Calu3 (cell line): ENCODE measurements at regions of chr2 and their contacts with region 1.

Region 1: DNA sequence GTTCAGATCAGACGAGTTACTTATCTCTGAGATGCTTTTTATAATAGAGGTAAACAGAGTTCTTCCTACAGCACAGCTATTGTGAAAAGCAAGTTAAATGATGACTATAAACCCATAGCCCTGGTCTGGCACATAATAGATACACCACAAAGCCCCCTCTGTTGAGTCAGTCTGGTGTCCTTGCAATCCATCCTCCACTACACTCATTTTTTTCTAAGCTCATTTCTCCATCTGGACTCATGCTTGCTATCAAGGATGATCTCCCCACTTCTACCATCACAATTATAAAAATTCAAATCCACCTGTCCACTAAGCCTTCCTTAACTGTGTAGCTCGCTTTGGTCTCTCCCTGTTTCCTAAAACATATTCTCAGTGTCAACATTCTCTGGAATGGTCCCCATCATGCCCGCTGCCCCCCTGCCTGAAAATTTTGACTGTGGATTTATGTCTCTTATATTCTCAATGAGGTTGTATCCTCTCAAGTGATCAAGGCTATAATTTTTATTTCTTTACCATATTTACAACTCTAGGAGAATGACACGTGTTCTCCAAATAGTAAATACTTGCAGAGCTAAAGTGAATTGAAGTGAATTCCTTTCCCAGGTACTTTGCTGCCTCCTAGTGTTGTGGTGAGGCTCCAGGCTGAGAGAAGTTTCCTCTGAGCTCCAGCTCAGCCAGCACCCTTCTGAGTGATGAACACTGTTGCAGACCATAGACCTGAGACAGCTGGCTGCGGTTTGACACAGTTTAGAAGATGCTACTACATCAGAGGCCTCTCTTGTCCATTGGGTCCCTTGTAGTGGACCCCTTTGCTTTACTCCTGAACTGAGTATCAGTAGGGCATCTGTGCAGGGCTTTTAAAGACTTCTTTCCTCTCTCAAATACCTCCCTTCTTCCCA is 108.7 kb downstream of the DPP10 start:
- DNase-seq: peak; percentile 71
- H3K4me3 Mint-ChIP-seq: no peak overlapping the region
- H3K27ac Mint-ChIP-seq: peak overlapping the region; percentile 12
- H3K4me1 Mint-ChIP-seq: peaks cover 44% of the 10 kb centered on the region
- H3K27me3 Mint-ChIP-seq: peaks cover 22% of the 10 kb centered on the region
- CTCF ChIP-seq: peak; percentile 78

Region 2: DNA sequence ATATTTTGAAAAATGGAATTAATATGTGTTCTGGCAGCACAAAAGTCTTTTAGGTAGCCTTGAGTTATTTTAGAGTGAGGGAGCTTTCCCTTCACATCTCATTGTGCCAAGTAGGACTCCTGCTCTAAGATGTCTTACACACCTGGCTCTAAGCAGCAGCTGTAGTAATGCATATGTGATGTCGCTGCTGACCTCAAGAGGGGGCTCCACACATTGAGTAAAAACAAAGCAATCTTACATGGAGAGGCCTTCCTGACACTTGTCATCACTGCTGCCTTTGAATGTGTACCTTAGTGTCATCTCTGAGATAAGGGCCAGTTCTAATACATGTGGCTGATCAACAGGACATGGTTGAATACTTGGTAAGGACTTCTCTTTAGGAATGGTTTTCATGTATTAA is 585.5 kb before region 1 on chr2:
- CTCF ChIA-PET with region 1: interaction called, 15 read pairs
- intact Hi-C with region 1: loop called (anchors 2 kb)
- DNase-seq: peak; percentile 60
- H3K4me3 Mint-ChIP-seq: no peak overlapping the region
- H3K27ac Mint-ChIP-seq: no peak overlapping the region
- H3K4me1 Mint-ChIP-seq: peaks cover 42% of the 10 kb centered on the region
- H3K27me3 Mint-ChIP-seq: no peaks in the 10 kb centered on the region
- CTCF ChIP-seq: peak; percentile 59

Region 3: DNA sequence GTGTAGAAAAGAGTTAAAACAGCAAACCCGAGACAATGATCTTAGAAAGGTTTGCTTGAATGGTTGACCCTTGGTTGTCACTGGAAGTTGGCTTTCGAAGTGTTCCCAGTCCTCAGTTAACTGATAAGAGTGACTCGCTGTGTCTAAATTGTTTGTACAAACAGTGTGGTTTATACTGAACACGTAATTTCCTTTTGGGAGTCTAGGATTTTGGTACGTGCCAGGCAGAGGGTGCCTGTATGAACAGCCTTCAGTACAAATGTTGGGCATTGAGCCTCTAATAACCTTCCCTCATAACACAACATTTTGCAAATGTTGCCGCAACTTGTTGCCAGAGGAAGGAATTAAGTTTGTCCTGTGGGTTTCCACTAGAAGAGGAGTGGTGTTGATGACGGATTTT is 204.5 kb before region 1 on chr2:
- CTCF ChIA-PET with region 1: no interaction called
- intact Hi-C with region 1: no loop called
- DNase-seq: no peak
- H3K4me3 Mint-ChIP-seq: no peak overlapping the region
- H3K27ac Mint-ChIP-seq: no peak overlapping the region
- H3K4me1 Mint-ChIP-seq: no peaks in the 10 kb centered on the region
- H3K27me3 Mint-ChIP-seq: no peaks in the 10 kb centered on the region
- CTCF ChIP-seq: no peak